Natural killer cell (primary cell): ENCODE measurements at regions of chr17 and their contacts with region 1.

Region 1: GRCh38 chr17:22517716-22518115 is 825.4 kb downstream of the KCNJ18 start:
- DNase-seq: no peak
- ATAC-seq: no peak
- H3K4me3 ChIP-seq: no peak overlapping the region
- H3K4me3 Mint-ChIP-seq: no peak overlapping the region
- H3K27ac ChIP-seq: no peak overlapping the region
- H3K27ac Mint-ChIP-seq: no peak overlapping the region
- H3K4me1 ChIP-seq: no peaks in the 10 kb centered on the region
- H3K4me1 Mint-ChIP-seq: no peaks in the 10 kb centered on the region
- H3K27me3 ChIP-seq: no peaks in the 10 kb centered on the region
- H3K27me3 Mint-ChIP-seq: no peaks in the 10 kb centered on the region
- CTCF ChIP-seq: no peak

Region 2: DNA sequence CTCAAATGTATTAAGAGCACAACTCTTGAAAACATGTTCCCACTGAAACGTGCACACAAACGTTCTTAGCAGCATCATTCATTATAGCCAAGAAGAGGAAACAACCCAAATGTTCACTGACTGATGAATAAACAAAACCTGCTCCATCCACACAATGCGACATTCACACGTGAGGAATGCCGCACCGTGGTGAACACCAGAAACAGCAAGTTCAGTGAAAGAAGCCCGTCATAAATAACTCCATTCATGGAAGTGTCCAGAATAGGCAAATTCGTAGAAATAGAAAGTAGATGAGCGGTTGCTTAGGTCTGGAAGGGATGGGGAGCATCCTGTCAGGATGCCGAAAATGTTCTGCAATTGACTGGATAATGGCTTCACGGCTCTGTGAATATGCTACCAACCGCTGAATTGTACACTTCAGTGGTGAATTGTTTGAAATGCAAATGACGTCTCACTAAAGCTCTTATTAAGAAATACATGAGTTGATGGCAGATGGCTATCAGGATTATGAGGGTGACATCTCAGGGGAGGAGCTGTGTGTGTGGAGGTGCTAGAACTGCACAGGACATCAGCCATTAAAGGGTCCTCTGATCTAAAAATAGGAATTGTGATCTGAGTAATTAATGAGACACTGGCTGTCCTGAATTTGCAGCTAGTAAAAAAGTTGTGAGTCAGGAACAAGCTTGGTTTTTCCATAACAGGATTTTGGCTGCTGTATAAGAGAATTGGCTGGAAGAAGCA is 54.4 kb before region 1 on chr17:
- intact Hi-C with region 1: loop called (anchors 10 kb)
- DNase-seq: no peak
- ATAC-seq: no peak
- H3K4me3 ChIP-seq: no peak overlapping the region
- H3K4me3 Mint-ChIP-seq: no peak overlapping the region
- H3K27ac ChIP-seq: no peak overlapping the region
- H3K27ac Mint-ChIP-seq: no peak overlapping the region
- H3K4me1 ChIP-seq: no peaks in the 10 kb centered on the region
- H3K4me1 Mint-ChIP-seq: no peaks in the 10 kb centered on the region
- H3K27me3 ChIP-seq: no peaks in the 10 kb centered on the region
- H3K27me3 Mint-ChIP-seq: no peaks in the 10 kb centered on the region
- CTCF ChIP-seq: no peak

Region 3: GRCh38 chr17:22533744-22534143 is 16.0 kb after region 1 on chr17:
- intact Hi-C with region 1: no loop called
- DNase-seq: no peak
- ATAC-seq: no peak
- H3K4me3 ChIP-seq: no peak overlapping the region
- H3K4me3 Mint-ChIP-seq: no peak overlapping the region
- H3K27ac ChIP-seq: no peak overlapping the region
- H3K27ac Mint-ChIP-seq: no peak overlapping the region
- H3K4me1 ChIP-seq: no peaks in the 10 kb centered on the region
- H3K4me1 Mint-ChIP-seq: no peaks in the 10 kb centered on the region
- H3K27me3 ChIP-seq: no peaks in the 10 kb centered on the region
- H3K27me3 Mint-ChIP-seq: no peaks in the 10 kb centered on the region
- CTCF ChIP-seq: no peak